T-cell (primary cell): ENCODE measurements at regions of chr22 and their contacts with region 1.

Region 1: GRCh38 chr22:23144932-23145873 is at the start of gene RAB36:
- DNase-seq: peak; percentile 65 to 96 (median 85)
- ATAC-seq: peak; percentile 51 to 61 (median 56)
- H3K4me3 ChIP-seq: peak within 1 kb of the TSS in 1 of 2 donors; percentile 46
- H3K4me3 Mint-ChIP-seq: peak within 1 kb of the TSS; percentile 70 to 78 (median 74)
- H3K27ac ChIP-seq: peak within 1 kb of the TSS; percentile 80
- H3K27ac Mint-ChIP-seq: peak within 1 kb of the TSS; percentile 90 to 91
- H3K4me1 ChIP-seq: peaks cover 23 to 60% of the 10 kb centered on the region in 2 experiments
- H3K4me1 Mint-ChIP-seq: peaks cover 48 to 57% (median 49%) of the 10 kb centered on the region in 3 donors
- H3K27me3 ChIP-seq: no peaks in the 10 kb centered on the region
- H3K27me3 Mint-ChIP-seq: no peaks in the 10 kb centered on the region
- total RNA-seq, gene RAB36: 0.18 to 1.8 (median 0.47) TPM

Region 2: GRCh38 chr22:23098718-23099530 is 46.3 kb before region 1 on chr22:
- CTCF ChIA-PET with region 1: no interaction called
- POLR2A ChIA-PET with region 1: no interaction called
- DNase-seq: no peak
- ATAC-seq: no peak
- H3K4me3 ChIP-seq: no peak overlapping the region
- H3K4me3 Mint-ChIP-seq: no peak overlapping the region
- H3K27ac ChIP-seq: no peak overlapping the region
- H3K27ac Mint-ChIP-seq: no peak overlapping the region
- H3K4me1 ChIP-seq: no peaks in the 10 kb centered on the region
- H3K4me1 Mint-ChIP-seq: no peaks in the 10 kb centered on the region
- H3K27me3 ChIP-seq: peaks cover 0 to 2% of the 10 kb centered on the region in 2 experiments
- H3K27me3 Mint-ChIP-seq: no peaks in the 10 kb centered on the region

Region 3: DNA sequence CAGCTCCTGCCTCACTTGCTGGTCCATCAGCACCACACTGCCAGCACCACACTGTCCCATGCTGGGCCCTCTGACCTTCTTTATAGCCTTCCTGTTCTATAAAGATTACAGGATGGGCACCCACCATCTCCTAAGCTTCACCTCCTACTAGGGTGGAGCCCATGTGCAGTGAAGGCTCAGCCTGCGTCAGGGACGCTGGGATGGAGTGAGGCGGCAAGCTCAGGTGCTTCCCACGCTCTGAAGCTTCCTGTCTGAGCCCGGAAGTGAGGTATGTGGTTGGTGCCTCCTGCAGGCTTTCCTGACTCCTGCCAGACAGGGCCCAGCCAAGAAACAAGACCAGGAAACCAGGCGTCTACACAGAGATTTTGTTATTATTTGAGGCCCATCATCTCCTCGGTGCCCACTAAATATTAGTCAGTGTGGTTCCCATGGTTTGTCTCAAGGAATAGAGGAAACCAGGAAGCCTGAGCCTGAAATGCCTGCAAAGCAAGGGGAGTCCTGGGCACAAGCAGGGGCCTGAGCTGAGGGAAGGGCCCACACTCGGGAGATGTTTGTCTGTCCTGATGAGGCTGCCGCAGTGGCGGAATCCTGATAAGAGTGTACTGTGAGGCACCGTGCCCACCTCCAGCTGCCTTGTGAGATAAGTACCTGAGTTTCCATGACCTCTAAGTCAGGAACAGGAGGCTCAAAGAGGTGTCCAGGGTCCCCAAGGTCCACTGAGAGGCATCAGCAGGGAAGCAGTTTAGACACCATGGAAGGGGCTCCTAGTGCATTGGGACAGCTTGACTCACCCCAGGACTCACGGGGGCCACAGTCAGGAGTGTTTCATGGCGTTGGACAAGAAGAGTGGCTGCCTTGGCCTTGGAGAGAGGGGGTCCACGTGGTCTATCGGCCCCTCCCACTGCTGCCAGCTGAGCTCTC is 25.4 kb before region 1 on chr22:
- CTCF ChIA-PET with region 1: interaction called, 3 to 11 read pairs
- POLR2A ChIA-PET with region 1: interaction called in 1 of 2 experiments, 11 read pairs
- DNase-seq: peak; percentile 31 to 85 (median 58)
- ATAC-seq: peak; percentile 80 to 98 (median 86)
- H3K4me3 ChIP-seq: peak overlapping the region in 1 of 2 donors; percentile 19
- H3K4me3 Mint-ChIP-seq: peak overlapping the region; percentile 22 to 72 (median 63)
- H3K27ac ChIP-seq: peak overlapping the region; percentile 88
- H3K27ac Mint-ChIP-seq: peak overlapping the region; percentile 94 to 95
- H3K4me1 ChIP-seq: peaks cover 6 to 18% of the 10 kb centered on the region in 2 experiments
- H3K4me1 Mint-ChIP-seq: peaks cover 11 to 23% (median 14%) of the 10 kb centered on the region in 3 donors
- H3K27me3 ChIP-seq: peaks cover 0 to 9% of the 10 kb centered on the region in 2 experiments
- H3K27me3 Mint-ChIP-seq: no peaks in the 10 kb centered on the region

Region 4: DNA sequence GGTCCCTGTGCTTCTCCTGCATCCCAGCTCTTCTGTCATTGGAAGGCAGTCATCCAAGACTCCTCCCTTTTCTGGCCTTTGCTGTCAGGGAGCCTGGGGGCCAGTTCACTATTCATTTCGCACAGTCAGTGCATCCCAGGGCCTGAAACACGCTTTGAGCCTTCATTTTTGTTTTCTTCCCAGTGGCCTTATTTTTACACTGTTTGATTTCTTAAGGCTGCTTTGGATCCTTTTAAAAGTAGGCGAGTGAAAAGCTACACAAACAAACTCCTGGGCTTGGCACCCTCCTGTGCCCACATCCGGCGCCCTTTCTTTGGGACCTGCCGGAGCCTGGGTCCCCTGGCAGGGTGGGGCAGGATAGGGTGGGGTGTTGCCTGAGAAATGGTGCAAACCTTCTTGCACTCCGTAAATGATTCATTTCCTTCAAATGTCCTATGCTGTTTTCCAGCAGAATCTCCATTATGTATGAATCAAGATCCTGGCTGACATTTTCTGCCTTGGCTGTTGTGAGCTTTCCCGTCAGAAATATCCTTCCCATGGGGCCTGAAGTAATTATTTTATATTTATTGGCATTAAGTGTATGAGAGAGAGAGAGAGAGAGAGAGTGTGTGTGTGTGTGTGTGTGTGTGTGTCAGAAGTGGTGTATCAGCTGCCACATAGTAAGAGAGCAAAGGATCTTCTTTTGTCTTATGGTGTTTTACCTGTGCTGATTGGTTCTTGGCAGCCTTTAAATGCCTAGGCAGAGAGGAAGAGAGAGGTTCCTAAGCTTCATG is 80.7 kb after region 1 on chr22:
- CTCF ChIA-PET with region 1: no interaction called
- POLR2A ChIA-PET with region 1: no interaction called
- DNase-seq: peak in 32 of 35 experiments; percentile 31 to 71 (median 52)
- ATAC-seq: peak; percentile 84 to 92 (median 88)
- H3K4me3 ChIP-seq: no peak overlapping the region
- H3K4me3 Mint-ChIP-seq: peak overlapping the region; percentile 25 to 57 (median 54)
- H3K27ac ChIP-seq: peak overlapping the region; percentile 59
- H3K27ac Mint-ChIP-seq: peak overlapping the region; percentile 92 to 97
- H3K4me1 ChIP-seq: peaks cover 39 to 83% of the 10 kb centered on the region in 2 experiments
- H3K4me1 Mint-ChIP-seq: peaks cover 91 to 98% (median 96%) of the 10 kb centered on the region in 3 donors
- H3K27me3 ChIP-seq: no peaks in the 10 kb centered on the region
- H3K27me3 Mint-ChIP-seq: no peaks in the 10 kb centered on the region